Posterior vena cava (tissue), 2 donors: ENCODE measurements at regions of chr17 and their contacts with region 1.

Region 1: DNA sequence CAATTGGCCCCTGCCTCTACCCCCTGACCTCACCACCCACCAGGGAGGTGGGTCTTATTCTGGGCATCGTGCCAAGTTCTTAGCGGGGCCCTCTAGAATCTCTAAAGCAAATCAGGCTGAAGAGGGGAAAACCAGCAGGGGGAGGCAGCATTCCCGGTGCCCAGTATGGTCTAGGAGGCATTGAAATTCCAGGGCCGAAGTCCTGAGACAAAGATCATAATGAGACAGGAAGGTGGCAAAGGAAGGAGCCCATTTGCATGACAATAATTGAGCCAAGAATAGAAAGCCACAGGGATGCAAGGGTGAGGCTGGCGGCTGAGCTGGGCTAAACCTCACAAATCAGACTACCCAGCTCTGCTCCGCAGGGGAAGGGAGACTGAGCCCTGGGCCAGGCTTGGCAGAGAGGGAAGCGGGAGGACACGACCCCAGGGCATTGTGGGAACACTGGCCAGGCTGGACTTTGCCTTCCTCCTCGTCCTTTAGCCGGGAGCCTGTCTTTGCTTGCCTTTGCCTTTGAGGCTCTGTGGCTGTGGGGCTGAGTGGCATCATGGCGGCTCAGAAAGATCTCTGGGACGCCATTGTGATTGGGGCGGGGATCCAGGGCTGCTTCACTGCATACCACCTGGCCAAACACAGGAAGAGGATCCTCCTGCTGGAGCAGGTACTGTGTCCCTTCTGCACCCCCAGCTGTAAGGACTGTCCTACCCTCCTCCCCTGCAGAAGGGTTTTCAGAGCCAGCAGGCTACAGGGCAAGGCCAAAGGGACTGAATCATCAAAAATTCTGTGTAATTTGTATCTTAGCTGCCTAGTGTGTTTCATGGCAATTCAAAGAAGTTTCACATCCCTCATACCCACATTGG is at the start of gene PIPOX:
- DNase-seq: no peak
- total RNA-seq, gene PIPOX: 1.2 to 2.1 TPM

Region 2: DNA sequence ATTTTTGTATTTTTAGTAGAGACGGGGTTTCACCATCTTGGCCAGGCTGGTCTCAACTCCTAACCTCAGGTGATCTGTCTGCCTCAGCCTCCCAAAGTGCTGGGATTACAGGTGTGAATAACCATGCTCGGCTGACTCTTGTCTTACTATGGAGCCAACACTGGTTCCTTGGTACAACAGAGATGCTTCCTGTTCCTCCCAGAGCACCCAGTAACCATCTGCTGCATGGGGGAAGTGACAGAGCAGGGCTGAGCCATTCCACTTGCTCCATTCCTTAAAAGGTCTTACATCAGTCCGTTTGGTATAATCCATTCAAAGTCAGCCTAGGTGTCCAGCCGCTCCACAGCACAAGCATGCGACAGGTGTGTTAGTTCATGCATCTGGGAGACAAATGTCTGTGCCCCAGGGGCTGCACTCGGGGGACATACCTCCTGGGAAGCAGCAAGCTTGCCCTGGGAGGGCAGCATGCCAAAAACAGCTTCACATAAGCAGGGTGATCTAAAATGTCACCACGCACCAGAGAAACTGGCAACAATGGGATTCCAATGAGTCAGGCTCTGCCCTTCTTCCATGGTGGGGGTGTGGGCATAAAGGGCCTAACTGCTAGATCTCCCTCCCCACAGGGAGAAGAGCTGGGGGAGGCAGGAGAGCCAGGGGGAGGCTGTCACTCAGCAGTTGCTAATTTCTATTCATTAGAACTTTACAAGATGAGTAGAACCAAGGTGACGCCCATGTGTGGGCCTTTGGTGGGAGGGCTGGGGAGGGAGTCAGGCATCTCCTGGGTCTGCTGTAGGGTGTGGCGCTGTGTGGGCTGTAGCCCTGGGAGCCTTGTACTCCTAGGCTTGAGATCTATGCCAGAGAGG is 35.5 kb after region 1 on chr17:
- intact Hi-C with region 1: loop called in 1 of 2 experiments (anchors 1 kb)
- DNase-seq: no peak